ENCODE measurements at regions of chr12 and their contacts with region 1.

Region 1: GRCh38 chr12:42482445-42483237 is 106.9 kb downstream of the PRICKLE1 start:
- DNase-seq: peak; percentile 85
- ATAC-seq: peak; percentile 92

Region 2: DNA sequence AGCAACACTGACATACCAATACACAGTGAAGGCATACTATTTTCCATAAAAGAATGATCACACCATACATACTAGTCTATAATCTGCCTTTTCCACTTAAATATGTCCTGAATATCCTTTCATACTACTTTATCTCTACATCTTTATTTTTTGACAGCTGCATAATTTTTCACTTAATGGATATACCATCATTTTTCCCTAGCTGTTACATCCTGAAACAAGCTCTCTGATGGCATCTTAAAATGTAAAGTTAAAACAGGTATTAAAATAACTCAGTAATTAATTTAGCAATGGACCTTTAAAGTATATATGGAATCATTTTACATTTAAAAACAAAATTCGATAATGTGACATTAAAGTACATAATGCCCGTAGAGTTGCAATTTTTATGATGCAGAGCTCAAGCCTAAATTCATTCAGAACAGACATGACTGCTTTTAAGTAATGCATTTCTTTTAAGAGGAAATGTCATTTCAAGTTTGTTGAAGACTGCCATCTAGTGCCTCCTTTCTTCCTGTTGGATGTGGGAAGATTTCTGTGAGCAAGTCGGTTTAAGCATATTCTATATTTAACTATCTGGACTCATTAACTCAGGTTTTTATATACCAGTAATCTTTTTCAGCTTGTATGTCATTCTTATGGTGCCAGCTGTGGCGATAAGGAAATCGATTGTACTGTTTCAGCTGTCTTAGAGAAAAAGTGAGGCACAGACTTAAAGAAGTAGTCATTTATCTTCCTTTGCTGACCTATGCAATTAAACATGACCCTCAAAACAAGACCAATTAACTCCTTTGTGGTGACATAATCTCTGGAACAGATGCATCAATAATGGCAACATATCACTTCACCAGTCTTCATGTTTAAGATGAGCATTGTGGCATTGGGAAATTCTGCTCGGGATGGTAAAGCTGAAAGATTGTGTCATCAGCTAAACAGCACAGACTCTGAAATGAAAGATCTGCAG is 86.6 kb after region 1 on chr12:
- intact Hi-C with region 1: loop called (anchors 5 kb)
- DNase-seq: no peak
- ATAC-seq: peak; percentile 81

Region 3: GRCh38 chr12:42744539-42745156 is 262.0 kb after region 1 on chr12:
- intact Hi-C with region 1: loop called (anchors 5 kb)
- DNase-seq: no peak
- ATAC-seq: peak; percentile 41

Region 4: DNA sequence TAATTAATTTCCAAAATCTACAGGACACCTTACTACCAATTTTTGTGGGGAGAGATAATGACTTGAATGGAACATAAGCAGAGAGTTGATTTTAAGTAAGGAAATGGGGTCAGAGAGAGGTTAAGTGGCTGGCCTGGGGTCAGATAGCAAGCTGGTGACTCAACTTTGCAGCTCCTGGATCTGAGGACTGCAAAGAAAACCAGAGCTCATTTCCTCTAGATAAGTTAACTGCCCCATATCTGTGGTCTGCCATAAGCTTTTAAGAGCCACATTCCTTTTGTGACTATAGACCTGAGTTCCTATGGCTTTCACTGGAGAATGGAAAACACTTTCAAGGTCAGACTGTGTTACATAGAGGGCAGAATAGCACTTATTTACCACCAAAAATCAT is 308.1 kb after region 1 on chr12:
- intact Hi-C with region 1: no loop called
- DNase-seq: no peak
- ATAC-seq: peak; percentile 26

Region 5: DNA sequence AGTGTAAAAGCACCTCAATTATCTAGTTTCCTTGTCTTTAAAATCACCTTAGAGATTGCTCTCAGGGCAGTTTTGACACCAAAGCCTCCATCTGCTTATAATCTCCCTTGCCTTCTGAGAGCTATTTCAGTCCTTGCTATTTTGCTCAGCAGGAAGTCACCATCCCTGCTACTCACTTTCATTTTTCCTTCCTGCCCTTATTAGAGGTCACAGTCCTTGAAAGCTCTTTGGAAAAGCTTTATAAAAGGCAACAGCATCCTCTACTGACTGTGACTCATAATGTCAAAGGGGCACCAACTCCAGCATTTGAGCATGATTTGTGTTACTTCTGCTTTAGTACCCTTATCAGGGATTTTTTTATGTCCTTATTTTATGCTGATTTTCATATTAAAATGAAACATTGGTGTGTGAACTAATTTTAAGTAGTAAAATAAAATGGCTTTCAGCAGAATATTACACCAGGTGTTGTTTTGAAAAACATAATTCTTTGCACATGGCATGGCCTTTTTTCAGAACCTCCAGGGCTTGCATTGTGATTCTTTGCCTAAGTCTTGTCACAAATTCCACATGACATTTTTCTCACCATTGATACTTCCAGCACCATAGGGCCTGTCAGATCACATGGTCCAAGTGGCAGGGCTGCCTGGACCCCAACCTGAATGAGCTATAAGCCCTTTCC is 856.3 kb after region 1 on chr12:
- intact Hi-C with region 1: loop called (anchors 10 kb)
- DNase-seq: no peak
- ATAC-seq: peak; percentile 99

Measured in Right ventricle myocardium superior (tissue), 1 donor.